Mucosa of descending colon (tissue), 3 donors: ENCODE measurements at regions of chr7 and their contacts with region 1.

Region 1: GRCh38 chr7:140517546-140518369 is 38.5 kb upstream of the MKRN1 start:
- DNase-seq: peak; percentile 91 to 98 (median 96)
- ATAC-seq: peak; percentile 90
- H3K4me3 ChIP-seq: no peak overlapping the region
- H3K4me1 ChIP-seq: peaks cover 3% of the 10 kb centered on the region
- CTCF ChIP-seq: peak; percentile 66

Region 2: GRCh38 chr7:140653319-140654108 is 135.8 kb after region 1 on chr7:
- intact Hi-C with region 1: loop called (anchors 5 kb)
- DNase-seq: peak in 2 of 3 donors; percentile 47 to 80
- ATAC-seq: peak; percentile 75
- H3K4me3 ChIP-seq: no peak overlapping the region
- H3K4me1 ChIP-seq: peaks cover 15% of the 10 kb centered on the region
- CTCF ChIP-seq: peak; percentile 56